Mammary epithelial cell (primary cell): ENCODE measurements at regions of chr1 and their contacts with region 1.

Region 1: GRCh38 chr1:39462074-39462473 is 29.4 kb upstream of the BMP8A start:
- DNase-seq: no peak
- H3K4me3 ChIP-seq: no peak overlapping the region
- H3K27ac ChIP-seq: no peak overlapping the region
- H3K4me1 ChIP-seq: no peaks in the 10 kb centered on the region
- H3K27me3 ChIP-seq: no peaks in the 10 kb centered on the region
- CTCF ChIP-seq: no peak

Region 2: DNA sequence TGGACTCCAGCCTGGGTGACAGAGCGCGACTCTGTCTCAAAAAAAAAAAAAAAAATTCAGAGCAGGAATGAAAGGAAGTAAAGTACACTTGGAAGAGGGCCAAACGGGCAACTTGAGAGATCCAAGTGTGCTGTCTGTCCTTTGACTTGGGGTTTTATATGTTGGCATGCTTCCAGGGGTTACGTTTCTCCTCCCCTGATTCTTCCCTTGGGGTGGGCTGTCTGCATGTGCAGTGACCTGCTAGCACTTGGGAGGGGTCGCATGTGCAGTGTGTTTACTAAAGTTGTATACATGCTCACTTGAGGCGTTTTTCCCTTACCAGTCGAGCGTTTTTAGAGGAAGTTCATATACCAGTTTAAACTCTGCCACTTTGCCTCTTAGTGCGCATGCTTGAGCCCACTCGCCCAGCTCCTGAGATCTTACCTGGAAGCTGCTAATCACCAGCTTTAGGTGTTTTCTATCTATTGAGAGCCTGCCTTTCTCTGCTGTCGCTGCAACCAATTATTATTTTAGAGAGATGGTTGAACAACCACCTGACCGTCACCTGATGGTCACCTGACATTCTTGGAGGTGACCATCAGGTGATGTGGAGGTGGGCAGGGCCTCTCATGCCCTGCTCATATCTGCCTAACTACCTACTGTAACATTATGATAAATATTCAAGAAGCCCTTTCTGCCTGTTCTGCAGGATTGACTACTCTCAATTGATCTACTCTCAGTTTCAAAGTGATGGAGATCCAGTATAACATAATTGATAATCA is 117.5 kb before region 1 on chr1:
- CTCF ChIA-PET with region 1: no interaction called
- dilution Hi-C with region 1: no loop called
- in situ Hi-C with region 1: no loop called
- intact Hi-C with region 1: no loop called
- DNase-seq: no peak
- H3K4me3 ChIP-seq: no peak overlapping the region
- H3K27ac ChIP-seq: no peak overlapping the region
- H3K4me1 ChIP-seq: no peaks in the 10 kb centered on the region
- H3K27me3 ChIP-seq: no peaks in the 10 kb centered on the region
- CTCF ChIP-seq: no peak

Region 3: GRCh38 chr1:39378377-39378776 is 83.7 kb before region 1 on chr1:
- CTCF ChIA-PET with region 1: no interaction called
- dilution Hi-C with region 1: loop called (anchors 5 kb)
- in situ Hi-C with region 1: no loop called
- intact Hi-C with region 1: no loop called
- DNase-seq: peak; percentile 95
- H3K4me3 ChIP-seq: no peak overlapping the region
- H3K27ac ChIP-seq: peak overlapping the region; percentile 45
- H3K4me1 ChIP-seq: peaks cover 15% of the 10 kb centered on the region
- H3K27me3 ChIP-seq: no peaks in the 10 kb centered on the region
- CTCF ChIP-seq: peak; percentile 91

Region 4: GRCh38 chr1:39422614-39423013 is 39.5 kb before region 1 on chr1:
- CTCF ChIA-PET with region 1: no interaction called
- dilution Hi-C with region 1: loop called (anchors 5 kb)
- in situ Hi-C with region 1: no loop called
- intact Hi-C with region 1: no loop called
- DNase-seq: no peak
- H3K4me3 ChIP-seq: no peak overlapping the region
- H3K27ac ChIP-seq: no peak overlapping the region
- H3K4me1 ChIP-seq: no peaks in the 10 kb centered on the region
- H3K27me3 ChIP-seq: no peaks in the 10 kb centered on the region
- CTCF ChIP-seq: no peak